GM12878 (cell line): ENCODE measurements at regions of chr3 and their contacts with region 1.

Region 1: GRCh38 chr3:16884084-16884747 is 539 bp upstream of the PLCL2 start:
- DNase-seq: no peak
- ATAC-seq: peak; percentile 71
- H3K4me3 ChIP-seq: peak overlapping the region; percentile 75
- H3K27ac ChIP-seq: peak overlapping the region; percentile 93
- H3K4me1 ChIP-seq: peaks cover 2% of the 10 kb centered on the region; the same call in 1 of the 2 replicates
- H3K27me3 ChIP-seq: no peaks in the 10 kb centered on the region
- CTCF ChIP-seq: peak; percentile 37 to 79 (median 74)
- EP300 ChIP-seq: no peak
- POLR2A ChIP-seq: peak; percentile 66
- RAD21 ChIP-seq: peak; percentile 64

Region 2: GRCh38 chr3:16600780-16601539 is 283.3 kb before region 1 on chr3:
- CTCF ChIA-PET with region 1: interaction called, 3 read pairs
- POLR2A ChIA-PET with region 1: no interaction called
- RAD21 ChIA-PET with region 1: no interaction called
- SMC1A ChIA-PET with region 1: interaction called, 4 read pairs
- in situ Hi-C with region 1: no loop called
- intact Hi-C with region 1: loop called (anchors 5 kb)
- DNase-seq: no peak
- ATAC-seq: peak; percentile 86
- H3K4me3 ChIP-seq: no peak overlapping the region
- H3K27ac ChIP-seq: no peak overlapping the region
- H3K4me1 ChIP-seq: peaks cover 7% of the 10 kb centered on the region
- H3K27me3 ChIP-seq: no peaks in the 10 kb centered on the region
- CTCF ChIP-seq: peak; percentile 56 to 81 (median 69)
- EP300 ChIP-seq: no peak
- POLR2A ChIP-seq: no peak
- RAD21 ChIP-seq: peak; percentile 96

Region 3: GRCh38 chr3:16849229-16849628 is 35.0 kb before region 1 on chr3:
- CTCF ChIA-PET with region 1: interaction called, 56 read pairs
- POLR2A ChIA-PET with region 1: interaction called, 4 read pairs
- RAD21 ChIA-PET with region 1: interaction called, 5 read pairs
- SMC1A ChIA-PET with region 1: interaction called, 45 read pairs
- in situ Hi-C with region 1: no loop called
- intact Hi-C with region 1: no loop called
- DNase-seq: no peak
- ATAC-seq: peak; percentile 94
- H3K4me3 ChIP-seq: 0 out of 2 replicates have a peak overlapping the region, but pooled peaks have one; percentile 25
- H3K27ac ChIP-seq: peak overlapping the region; percentile 51; the same call in 1 of the 2 replicates
- H3K4me1 ChIP-seq: peaks cover 16% of the 10 kb centered on the region
- H3K27me3 ChIP-seq: no peaks in the 10 kb centered on the region
- CTCF ChIP-seq: no peak
- EP300 ChIP-seq: no peak
- POLR2A ChIP-seq: no peak
- RAD21 ChIP-seq: no peak

Region 4: DNA sequence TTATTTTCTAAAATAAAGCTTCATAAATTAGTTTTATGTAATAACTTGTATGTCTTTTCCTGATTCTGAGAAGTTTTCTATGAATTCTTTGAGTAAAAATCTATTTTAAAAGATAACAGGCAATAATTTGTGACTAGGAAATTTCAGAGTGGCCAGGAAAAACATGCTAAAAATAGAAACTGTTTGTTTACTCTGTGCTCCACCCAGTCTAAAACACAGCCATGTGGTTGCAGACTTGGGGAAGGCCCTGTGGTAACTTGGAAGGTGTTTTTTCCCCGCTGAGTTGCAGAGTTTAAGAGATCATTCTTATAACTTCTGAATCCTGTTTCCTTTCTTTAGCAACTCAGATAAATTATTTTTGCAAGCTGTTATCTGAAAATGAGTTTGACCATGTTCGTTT is 22.5 kb after region 1 on chr3:
- CTCF ChIA-PET with region 1: interaction called, 26 read pairs
- POLR2A ChIA-PET with region 1: interaction called, 10 read pairs
- RAD21 ChIA-PET with region 1: interaction called, 76 read pairs
- SMC1A ChIA-PET with region 1: interaction called, 68 read pairs
- in situ Hi-C with region 1: no loop called
- intact Hi-C with region 1: no loop called
- DNase-seq: no peak
- ATAC-seq: peak; percentile 62
- H3K4me3 ChIP-seq: no peak overlapping the region
- H3K27ac ChIP-seq: peak overlapping the region; percentile 63
- H3K4me1 ChIP-seq: peaks cover 50% of the 10 kb centered on the region
- H3K27me3 ChIP-seq: no peaks in the 10 kb centered on the region
- CTCF ChIP-seq: no peak
- EP300 ChIP-seq: no peak
- POLR2A ChIP-seq: no peak
- RAD21 ChIP-seq: no peak

Region 5: GRCh38 chr3:16928386-16929132 is 44.3 kb after region 1 on chr3:
- CTCF ChIA-PET with region 1: interaction called, 12 read pairs
- POLR2A ChIA-PET with region 1: interaction called, 4 read pairs
- RAD21 ChIA-PET with region 1: interaction called, 16 read pairs
- SMC1A ChIA-PET with region 1: interaction called, 45 read pairs
- in situ Hi-C with region 1: no loop called
- intact Hi-C with region 1: loop called (anchors 5 kb)
- DNase-seq: no peak
- ATAC-seq: peak; percentile 69
- H3K4me3 ChIP-seq: 0 out of 2 replicates have a peak overlapping the region, but pooled peaks have one; percentile 4
- H3K27ac ChIP-seq: peak overlapping the region; percentile 63
- H3K4me1 ChIP-seq: peaks cover 66% of the 10 kb centered on the region
- H3K27me3 ChIP-seq: no peaks in the 10 kb centered on the region
- CTCF ChIP-seq: no peak
- EP300 ChIP-seq: no peak
- POLR2A ChIP-seq: no peak
- RAD21 ChIP-seq: no peak

Region 6: GRCh38 chr3:17151598-17152373 is 267.6 kb after region 1 on chr3:
- CTCF ChIA-PET with region 1: interaction called, 4 read pairs
- POLR2A ChIA-PET with region 1: no interaction called
- RAD21 ChIA-PET with region 1: interaction called, 6 read pairs
- SMC1A ChIA-PET with region 1: interaction called, 5 read pairs
- in situ Hi-C with region 1: no loop called
- intact Hi-C with region 1: loop called (anchors 10 kb)
- DNase-seq: peak; percentile 92
- ATAC-seq: peak; percentile 96
- H3K4me3 ChIP-seq: 0 out of 2 replicates have a peak overlapping the region, but pooled peaks have one; percentile 1
- H3K27ac ChIP-seq: peak overlapping the region; percentile 76
- H3K4me1 ChIP-seq: peaks cover 25% of the 10 kb centered on the region
- H3K27me3 ChIP-seq: no peaks in the 10 kb centered on the region
- CTCF ChIP-seq: 0 out of 6 replicates have a peak, but pooled peaks of 1 of the 3 experiments have one; percentile 1
- EP300 ChIP-seq: peak; percentile 73 to 82
- POLR2A ChIP-seq: peak; percentile 67; the same call in 1 of the 2 replicates
- RAD21 ChIP-seq: peak; percentile 32

Region 7: DNA sequence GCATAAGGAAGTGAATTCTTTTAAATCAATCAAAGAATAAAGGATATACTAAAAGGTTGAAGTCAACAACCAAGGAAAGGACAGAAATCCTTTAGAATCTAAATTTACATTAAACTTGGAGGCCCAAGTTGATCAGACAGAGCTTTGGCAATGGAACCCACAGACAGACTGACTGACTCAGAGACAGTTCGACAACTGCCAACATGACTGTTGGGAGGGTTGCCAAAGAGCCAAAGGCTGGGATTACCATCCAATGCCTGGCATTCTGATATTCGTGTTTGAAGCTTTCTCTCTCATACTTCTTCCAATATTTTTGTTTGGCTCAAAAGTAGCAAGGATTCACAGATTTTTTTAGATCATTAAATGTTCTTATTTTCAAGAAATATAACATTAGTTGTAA is 406.7 kb after region 1 on chr3:
- CTCF ChIA-PET with region 1: no interaction called
- POLR2A ChIA-PET with region 1: no interaction called
- RAD21 ChIA-PET with region 1: no interaction called
- SMC1A ChIA-PET with region 1: no interaction called
- in situ Hi-C with region 1: no loop called
- intact Hi-C with region 1: no loop called
- DNase-seq: no peak
- ATAC-seq: no peak
- H3K4me3 ChIP-seq: no peak overlapping the region
- H3K27ac ChIP-seq: no peak overlapping the region
- H3K4me1 ChIP-seq: no peaks in the 10 kb centered on the region
- H3K27me3 ChIP-seq: no peaks in the 10 kb centered on the region
- CTCF ChIP-seq: no peak
- EP300 ChIP-seq: no peak
- POLR2A ChIP-seq: no peak
- RAD21 ChIP-seq: no peak

Region 8: DNA sequence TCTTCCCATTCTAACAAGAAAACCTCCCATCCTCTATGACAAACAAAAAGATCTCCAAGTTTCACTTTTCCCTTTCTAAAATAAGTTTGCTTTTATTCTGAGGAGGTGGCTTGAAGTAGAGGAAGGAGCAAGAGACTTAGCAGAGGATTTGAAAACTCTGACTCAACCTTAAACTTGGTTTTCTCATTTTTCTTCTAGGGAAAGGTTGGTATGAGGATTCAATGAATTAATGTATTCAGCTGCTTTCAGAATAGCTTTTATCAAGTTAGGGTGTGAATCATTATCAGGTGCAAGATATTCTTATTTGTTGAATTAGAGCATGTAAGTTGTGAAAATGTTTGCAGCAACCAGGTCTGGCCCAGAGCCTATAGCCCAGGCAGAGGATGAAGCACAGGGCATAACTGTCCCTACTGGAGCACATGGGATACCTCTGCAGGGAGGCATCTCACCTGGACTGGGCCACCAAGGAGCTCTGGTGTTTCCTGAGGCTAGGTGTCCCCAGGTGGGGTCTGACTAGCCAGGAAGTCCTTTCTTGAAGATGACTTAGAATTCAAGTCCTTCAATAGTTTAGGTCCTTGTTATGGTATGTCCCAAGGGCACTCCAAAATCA is 1498.6 kb after region 1 on chr3:
- CTCF ChIA-PET with region 1: no interaction called
- POLR2A ChIA-PET with region 1: no interaction called
- RAD21 ChIA-PET with region 1: no interaction called
- SMC1A ChIA-PET with region 1: no interaction called
- in situ Hi-C with region 1: no loop called
- intact Hi-C with region 1: no loop called
- DNase-seq: no peak
- ATAC-seq: no peak
- H3K4me3 ChIP-seq: no peak overlapping the region
- H3K27ac ChIP-seq: no peak overlapping the region
- H3K4me1 ChIP-seq: no peaks in the 10 kb centered on the region
- H3K27me3 ChIP-seq: no peaks in the 10 kb centered on the region
- CTCF ChIP-seq: no peak
- EP300 ChIP-seq: no peak
- POLR2A ChIP-seq: no peak
- RAD21 ChIP-seq: no peak